Breast epithelium (tissue), 4 donors: ENCODE measurements at regions of chr13 and their contacts with region 1.

Region 1: DNA sequence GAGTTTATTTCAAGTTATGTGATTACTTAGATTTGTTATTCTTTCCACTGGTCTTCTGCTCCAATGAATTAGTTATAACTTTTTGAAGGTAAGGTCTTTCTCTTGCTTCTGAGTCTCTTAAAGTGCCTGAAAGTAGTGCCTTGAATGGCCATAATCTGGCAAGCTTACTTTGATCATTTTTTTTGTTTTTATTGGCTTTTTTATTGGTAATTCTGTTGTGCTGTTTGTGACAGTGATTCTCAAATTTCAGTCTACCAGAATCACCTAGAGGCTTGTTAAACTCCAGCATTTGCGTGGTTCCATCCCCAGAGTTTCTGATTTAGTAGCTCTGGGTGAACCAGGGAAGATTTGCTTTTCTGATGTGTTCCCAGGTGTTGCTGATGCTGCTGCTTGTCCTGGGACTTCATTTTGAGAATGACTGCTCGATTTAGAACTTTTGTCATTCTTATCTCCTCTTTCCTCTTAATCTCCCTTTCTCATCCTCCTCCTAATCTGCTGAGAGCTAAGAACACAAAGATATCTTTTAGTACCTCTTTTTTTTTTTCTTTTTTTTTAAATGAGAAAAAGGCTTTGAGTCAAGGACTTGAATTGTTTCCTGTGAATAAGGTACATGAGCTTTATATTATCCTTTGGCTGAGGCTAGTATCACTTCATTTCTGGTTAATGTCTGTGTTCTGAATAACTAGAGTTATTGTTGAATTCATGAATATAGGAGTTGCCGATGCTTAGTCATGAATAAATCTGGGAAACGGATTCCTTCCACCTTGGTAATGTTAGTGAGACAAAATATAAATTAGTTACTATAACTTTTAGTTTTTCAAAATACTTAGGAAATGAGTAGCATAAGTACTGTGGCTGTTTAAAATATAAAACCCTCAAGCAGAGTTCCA is 91.4 kb downstream of the PAN3 start:
- DNase-seq: no peak
- H3K4me3 ChIP-seq: no peak overlapping the region
- H3K27ac ChIP-seq: no peak overlapping the region
- H3K4me1 ChIP-seq: no peaks in the 10 kb centered on the region
- H3K27me3 ChIP-seq: no peaks in the 10 kb centered on the region
- CTCF ChIP-seq: no peak
- POLR2A ChIP-seq: no peak

Region 2: DNA sequence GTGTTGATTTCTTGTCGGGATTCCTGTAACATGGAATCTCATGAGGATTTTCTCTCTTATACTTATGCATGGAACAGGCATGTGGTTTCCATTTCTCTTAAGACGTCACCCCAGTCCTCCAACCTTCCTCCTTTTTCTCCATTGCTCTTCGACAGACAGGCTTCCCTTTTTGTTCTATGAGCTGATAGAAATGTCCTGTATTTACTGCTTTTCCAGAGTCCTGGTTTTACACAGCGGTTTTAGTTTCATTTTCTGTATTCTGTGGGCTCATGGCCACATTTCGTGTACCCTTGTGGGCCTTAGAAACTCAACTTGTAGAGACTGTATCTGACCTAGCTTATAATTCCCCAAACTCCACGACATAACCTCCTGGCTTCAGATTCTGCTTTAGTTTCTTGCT is 21.7 kb after region 1 on chr13:
- intact Hi-C with region 1: no loop called
- DNase-seq: no peak
- H3K4me3 ChIP-seq: no peak overlapping the region
- H3K27ac ChIP-seq: no peak overlapping the region
- H3K4me1 ChIP-seq: no peaks in the 10 kb centered on the region
- H3K27me3 ChIP-seq: no peaks in the 10 kb centered on the region
- CTCF ChIP-seq: no peak
- POLR2A ChIP-seq: no peak

Region 3: GRCh38 chr13:28329395-28330158 is 99.8 kb after region 1 on chr13:
- intact Hi-C with region 1: loop called (anchors 5 kb)
- DNase-seq: no peak
- H3K4me3 ChIP-seq: peak overlapping the region in 1 of 3 donors; percentile 31
- H3K27ac ChIP-seq: no peak overlapping the region
- H3K4me1 ChIP-seq: no peaks in the 10 kb centered on the region
- H3K27me3 ChIP-seq: no peaks in the 10 kb centered on the region
- CTCF ChIP-seq: no peak
- POLR2A ChIP-seq: no peak

Region 4: DNA sequence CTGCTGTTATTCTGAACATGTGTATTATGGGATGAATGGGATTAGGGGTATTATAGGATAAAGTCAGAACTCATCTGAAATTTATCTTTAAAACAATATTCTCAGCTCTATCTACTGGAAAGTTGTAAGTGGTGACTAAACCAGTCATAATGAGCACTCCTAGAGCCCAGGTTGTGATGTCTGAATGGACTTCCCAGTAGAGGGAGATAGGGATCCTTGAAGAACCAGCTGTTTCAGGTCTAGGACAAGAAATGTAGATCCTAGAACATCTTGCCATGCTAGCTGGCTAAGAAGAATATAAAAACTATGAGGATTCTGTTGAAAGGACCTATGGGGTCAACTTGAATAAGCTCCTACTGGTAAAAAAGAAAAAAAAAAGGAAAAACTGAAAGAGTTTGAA is 1055.0 kb after region 1 on chr13:
- intact Hi-C with region 1: no loop called
- DNase-seq: no peak
- H3K4me3 ChIP-seq: no peak overlapping the region
- H3K27ac ChIP-seq: no peak overlapping the region
- H3K4me1 ChIP-seq: no peaks in the 10 kb centered on the region
- H3K27me3 ChIP-seq: no peaks in the 10 kb centered on the region
- CTCF ChIP-seq: no peak
- POLR2A ChIP-seq: no peak